ENCODE measurements at regions of chr2 and their contacts with region 1.

Region 1: GRCh38 chr2:69933839-69934613 is 19.1 kb downstream of the MXD1 start:
- DNase-seq: no peak
- H3K4me3 ChIP-seq: no peak overlapping the region
- H3K27ac ChIP-seq: no peak overlapping the region
- H3K4me1 ChIP-seq: peaks cover 0 to 7% (median 3%) of the 10 kb centered on the region in 3 donors
- H3K27me3 ChIP-seq: no peaks in the 10 kb centered on the region
- CTCF ChIP-seq: no peak

Region 2: GRCh38 chr2:70069049-70069448 is 135.0 kb after region 1 on chr2:
- intact Hi-C with region 1: loop called (anchors 10 kb)
- DNase-seq: no peak
- H3K4me3 ChIP-seq: no peak overlapping the region
- H3K27ac ChIP-seq: peak overlapping the region in 1 of 2 donors; percentile 63
- H3K4me1 ChIP-seq: peaks cover 0 to 11% (median 9%) of the 10 kb centered on the region in 3 donors
- H3K27me3 ChIP-seq: no peaks in the 10 kb centered on the region
- CTCF ChIP-seq: no peak

Measured in kidney (tissue), 22 donors.